ENCODE measurements at regions of chr10 and their contacts with region 1.

Region 1: DNA sequence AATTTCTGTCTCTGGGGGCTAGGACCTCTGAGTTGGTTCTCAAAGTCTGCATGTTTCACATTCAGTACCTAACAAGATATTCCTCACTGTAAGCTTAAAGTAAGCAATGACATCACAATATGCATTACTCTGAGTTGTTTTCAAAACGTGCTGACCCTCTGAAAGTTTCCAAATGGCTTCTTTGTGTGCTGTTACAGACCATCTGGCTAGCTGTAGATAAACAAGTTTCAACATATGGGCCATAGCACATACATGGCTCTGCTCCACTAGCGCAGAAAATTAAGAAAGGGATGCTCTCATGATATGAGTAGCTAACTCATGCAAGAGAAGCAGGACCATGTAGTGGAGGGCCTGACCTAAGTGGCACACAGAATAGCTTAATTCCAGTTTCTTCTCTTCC is 119.0 kb downstream of the HTR7 start:
- DNase-seq: no peak
- ATAC-seq: no peak
- H3K4me3 ChIP-seq: no peak overlapping the region
- H3K27ac ChIP-seq: no peak overlapping the region
- H3K4me1 ChIP-seq: no peaks in the 10 kb centered on the region
- H3K27me3 ChIP-seq: no peaks in the 10 kb centered on the region
- CTCF ChIP-seq: no peak
- EP300 ChIP-seq: no peak
- POLR2A ChIP-seq: no peak
- RAD21 ChIP-seq: no peak

Region 2: DNA sequence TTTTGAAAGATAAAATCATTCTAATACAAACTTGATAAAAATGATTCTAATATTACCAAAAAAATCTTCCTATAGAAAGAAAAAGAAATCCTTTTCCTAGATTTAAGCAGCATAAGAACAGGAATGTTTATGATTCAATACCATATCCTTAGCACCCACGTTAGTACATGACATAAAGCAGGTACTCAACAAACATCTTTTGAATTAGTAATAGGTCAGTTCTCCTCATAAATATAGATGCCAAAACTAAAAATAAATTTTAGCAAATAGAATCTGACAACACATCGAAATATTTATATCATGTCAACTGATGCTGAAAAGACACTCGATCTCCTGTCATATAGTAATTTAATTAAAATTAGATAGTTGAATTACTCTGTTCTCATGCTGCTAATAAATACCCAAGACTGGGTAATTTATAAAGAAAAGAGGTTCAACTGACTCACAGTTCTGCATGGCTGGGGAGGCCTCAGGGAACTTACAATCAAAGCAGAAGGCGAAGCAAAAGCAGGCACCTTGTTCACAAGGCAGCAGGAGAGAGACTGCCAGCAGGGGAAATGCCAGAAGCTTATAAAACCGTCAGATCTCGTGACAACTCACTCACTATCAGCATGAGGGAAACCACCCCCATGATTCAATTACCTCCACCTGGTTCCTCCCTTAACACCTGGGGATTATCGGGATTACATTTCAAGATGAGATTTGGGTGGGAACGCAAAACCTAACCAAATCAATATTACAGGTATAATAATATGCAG is 72.8 kb before region 1 on chr10:
- CTCF ChIA-PET with region 1: no interaction called
- POLR2A ChIA-PET with region 1: no interaction called
- in situ Hi-C with region 1: no loop called
- intact Hi-C with region 1: no loop called
- DNase-seq: no peak
- ATAC-seq: no peak
- H3K4me3 ChIP-seq: no peak overlapping the region
- H3K27ac ChIP-seq: no peak overlapping the region
- H3K4me1 ChIP-seq: no peaks in the 10 kb centered on the region
- H3K27me3 ChIP-seq: no peaks in the 10 kb centered on the region; a peak in 1 of 5 replicates
- CTCF ChIP-seq: no peak
- EP300 ChIP-seq: no peak
- POLR2A ChIP-seq: no peak
- RAD21 ChIP-seq: no peak

Region 3: GRCh38 chr10:90787393-90788198 is 48.7 kb after region 1 on chr10:
- CTCF ChIA-PET with region 1: no interaction called
- POLR2A ChIA-PET with region 1: no interaction called
- in situ Hi-C with region 1: no loop called
- intact Hi-C with region 1: loop called (anchors 1 kb)
- DNase-seq: peak; percentile 9
- ATAC-seq: peak; percentile 78
- H3K4me3 ChIP-seq: no peak overlapping the region
- H3K27ac ChIP-seq: no peak overlapping the region
- H3K4me1 ChIP-seq: no peaks in the 10 kb centered on the region
- H3K27me3 ChIP-seq: peaks cover 0 to 9% of the 10 kb centered on the region in 2 experiments; a peak in 3 of 5 replicates
- CTCF ChIP-seq: peak; percentile 65
- EP300 ChIP-seq: no peak
- POLR2A ChIP-seq: no peak
- RAD21 ChIP-seq: no peak

Measured in HepG2 (cell line).